ENCODE measurements at regions of chr14 and their contacts with region 1.

Region 1: GRCh38 chr14:67943947-67944346 is 124.4 kb downstream of the RAD51B start:
- DNase-seq: peak; percentile 87
- ATAC-seq: peak; percentile 53
- H3K4me3 ChIP-seq: no peak overlapping the region
- H3K27ac ChIP-seq: no peak overlapping the region
- H3K4me1 ChIP-seq: peaks cover 17% of the 10 kb centered on the region
- H3K27me3 ChIP-seq: no peaks in the 10 kb centered on the region
- CTCF ChIP-seq: peak; percentile 87
- POLR2A ChIP-seq: no peak
- RAD21 ChIP-seq: peak; percentile 88

Region 2: GRCh38 chr14:67749341-67750084 is 194.4 kb before region 1 on chr14:
- CTCF ChIA-PET with region 1: no interaction called
- POLR2A ChIA-PET with region 1: no interaction called
- dilution Hi-C with region 1: no loop called
- in situ Hi-C with region 1: no loop called
- intact Hi-C with region 1: no loop called
- DNase-seq: peak; percentile 7
- ATAC-seq: no peak
- H3K4me3 ChIP-seq: no peak overlapping the region
- H3K27ac ChIP-seq: no peak overlapping the region
- H3K4me1 ChIP-seq: no peaks in the 10 kb centered on the region
- H3K27me3 ChIP-seq: no peaks in the 10 kb centered on the region
- CTCF ChIP-seq: no peak
- POLR2A ChIP-seq: no peak
- RAD21 ChIP-seq: no peak

Region 3: GRCh38 chr14:68146807-68147206 is 202.9 kb after region 1 on chr14:
- CTCF ChIA-PET with region 1: no interaction called
- POLR2A ChIA-PET with region 1: no interaction called
- dilution Hi-C with region 1: no loop called
- in situ Hi-C with region 1: no loop called
- intact Hi-C with region 1: loop called (anchors 5 kb)
- DNase-seq: peak; percentile 96
- ATAC-seq: peak; percentile 94
- H3K4me3 ChIP-seq: no peak overlapping the region
- H3K27ac ChIP-seq: no peak overlapping the region
- H3K4me1 ChIP-seq: peaks cover 14% of the 10 kb centered on the region
- H3K27me3 ChIP-seq: no peaks in the 10 kb centered on the region
- CTCF ChIP-seq: no peak
- POLR2A ChIP-seq: no peak
- RAD21 ChIP-seq: no peak

Region 4: GRCh38 chr14:68191567-68192321 is 247.8 kb after region 1 on chr14:
- CTCF ChIA-PET with region 1: no interaction called
- POLR2A ChIA-PET with region 1: no interaction called
- dilution Hi-C with region 1: no loop called
- in situ Hi-C with region 1: no loop called
- intact Hi-C with region 1: no loop called
- DNase-seq: peak; percentile 37
- ATAC-seq: no peak
- H3K4me3 ChIP-seq: no peak overlapping the region
- H3K27ac ChIP-seq: no peak overlapping the region
- H3K4me1 ChIP-seq: peaks cover 2% of the 10 kb centered on the region; the same call in 1 of the 2 replicates
- H3K27me3 ChIP-seq: no peaks in the 10 kb centered on the region
- CTCF ChIP-seq: no peak
- POLR2A ChIP-seq: no peak
- RAD21 ChIP-seq: no peak

Region 5: DNA sequence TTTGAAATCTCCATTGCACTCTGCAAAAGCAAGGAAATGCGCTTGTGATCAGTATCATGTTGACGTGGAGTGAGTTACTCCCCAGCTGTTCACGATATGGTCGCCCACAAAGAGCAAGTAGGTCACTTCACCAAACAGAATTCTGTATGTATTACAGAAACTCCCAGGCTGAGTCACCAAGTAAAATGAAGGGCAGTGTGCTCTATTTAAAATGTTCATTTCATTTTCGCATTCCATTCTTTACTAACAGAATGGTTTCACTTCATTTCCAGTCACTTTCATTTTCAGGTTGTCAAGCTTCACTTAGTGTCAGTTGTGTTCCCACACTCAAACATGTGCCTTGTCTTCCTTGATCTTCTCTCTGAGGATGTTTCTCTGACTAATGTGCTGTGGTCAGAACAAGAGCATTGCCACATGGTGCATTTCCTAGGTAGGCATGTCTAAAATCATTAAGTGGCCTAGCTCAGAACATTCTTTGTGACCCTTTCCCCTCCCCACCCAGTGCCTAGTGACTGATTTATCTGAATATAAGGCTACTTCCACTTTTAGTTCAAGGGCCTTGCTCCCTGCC is 266.9 kb after region 1 on chr14:
- CTCF ChIA-PET with region 1: no interaction called
- POLR2A ChIA-PET with region 1: no interaction called
- dilution Hi-C with region 1: no loop called
- in situ Hi-C with region 1: no loop called
- intact Hi-C with region 1: no loop called
- DNase-seq: peak; percentile 99
- ATAC-seq: peak; percentile 95
- H3K4me3 ChIP-seq: peak overlapping the region; percentile 24; the same call in 1 of the 2 replicates
- H3K27ac ChIP-seq: peak overlapping the region; percentile 75; the same call in 1 of the 2 replicates
- H3K4me1 ChIP-seq: peaks cover 15% of the 10 kb centered on the region
- H3K27me3 ChIP-seq: no peaks in the 10 kb centered on the region
- CTCF ChIP-seq: no peak
- POLR2A ChIP-seq: no peak
- RAD21 ChIP-seq: peak; percentile 2; the same call in 1 of the 2 replicates

Region 6: GRCh38 chr14:68232300-68233055 is 288.5 kb after region 1 on chr14:
- CTCF ChIA-PET with region 1: interaction called, 3 read pairs
- POLR2A ChIA-PET with region 1: no interaction called
- dilution Hi-C with region 1: no loop called
- in situ Hi-C with region 1: no loop called
- intact Hi-C with region 1: loop called (anchors 5 kb)
- DNase-seq: peak; percentile 99
- ATAC-seq: peak; percentile 85
- H3K4me3 ChIP-seq: no peak overlapping the region
- H3K27ac ChIP-seq: peak overlapping the region; percentile 84
- H3K4me1 ChIP-seq: peaks cover 16% of the 10 kb centered on the region
- H3K27me3 ChIP-seq: no peaks in the 10 kb centered on the region
- CTCF ChIP-seq: no peak; the same call in 1 of the 2 replicates
- POLR2A ChIP-seq: 0 out of 2 replicates have a peak, but pooled peaks have one; percentile 21
- RAD21 ChIP-seq: peak; percentile 24; the same call in 1 of the 2 replicates

Region 7: DNA sequence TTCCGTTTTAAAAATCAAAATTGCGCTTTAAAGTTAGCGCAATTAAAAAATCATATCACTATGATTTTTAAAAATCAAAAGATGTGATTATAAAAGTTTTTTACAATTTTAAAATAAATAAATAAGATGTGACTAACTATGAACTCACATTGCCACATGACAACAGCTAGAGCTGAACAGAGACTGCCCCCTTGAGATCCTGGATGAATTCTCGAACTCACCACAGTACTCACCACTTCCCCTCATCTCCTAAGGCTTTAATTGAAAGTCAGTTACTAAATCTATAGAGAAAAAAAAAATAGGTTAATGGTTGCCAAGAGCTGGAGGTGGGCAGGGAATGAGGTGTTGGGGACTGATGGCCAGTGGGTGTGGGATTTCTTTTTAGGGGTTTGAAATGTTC is 464.7 kb after region 1 on chr14:
- CTCF ChIA-PET with region 1: no interaction called
- POLR2A ChIA-PET with region 1: no interaction called
- dilution Hi-C with region 1: no loop called
- in situ Hi-C with region 1: no loop called
- intact Hi-C with region 1: loop called (anchors 5 kb)
- DNase-seq: peak; percentile 48
- ATAC-seq: no peak
- H3K4me3 ChIP-seq: no peak overlapping the region
- H3K27ac ChIP-seq: no peak overlapping the region
- H3K4me1 ChIP-seq: peaks cover 17% of the 10 kb centered on the region
- H3K27me3 ChIP-seq: no peaks in the 10 kb centered on the region
- CTCF ChIP-seq: peak; percentile 33
- POLR2A ChIP-seq: no peak
- RAD21 ChIP-seq: peak; percentile 31; the same call in 1 of the 2 replicates

Region 8: DNA sequence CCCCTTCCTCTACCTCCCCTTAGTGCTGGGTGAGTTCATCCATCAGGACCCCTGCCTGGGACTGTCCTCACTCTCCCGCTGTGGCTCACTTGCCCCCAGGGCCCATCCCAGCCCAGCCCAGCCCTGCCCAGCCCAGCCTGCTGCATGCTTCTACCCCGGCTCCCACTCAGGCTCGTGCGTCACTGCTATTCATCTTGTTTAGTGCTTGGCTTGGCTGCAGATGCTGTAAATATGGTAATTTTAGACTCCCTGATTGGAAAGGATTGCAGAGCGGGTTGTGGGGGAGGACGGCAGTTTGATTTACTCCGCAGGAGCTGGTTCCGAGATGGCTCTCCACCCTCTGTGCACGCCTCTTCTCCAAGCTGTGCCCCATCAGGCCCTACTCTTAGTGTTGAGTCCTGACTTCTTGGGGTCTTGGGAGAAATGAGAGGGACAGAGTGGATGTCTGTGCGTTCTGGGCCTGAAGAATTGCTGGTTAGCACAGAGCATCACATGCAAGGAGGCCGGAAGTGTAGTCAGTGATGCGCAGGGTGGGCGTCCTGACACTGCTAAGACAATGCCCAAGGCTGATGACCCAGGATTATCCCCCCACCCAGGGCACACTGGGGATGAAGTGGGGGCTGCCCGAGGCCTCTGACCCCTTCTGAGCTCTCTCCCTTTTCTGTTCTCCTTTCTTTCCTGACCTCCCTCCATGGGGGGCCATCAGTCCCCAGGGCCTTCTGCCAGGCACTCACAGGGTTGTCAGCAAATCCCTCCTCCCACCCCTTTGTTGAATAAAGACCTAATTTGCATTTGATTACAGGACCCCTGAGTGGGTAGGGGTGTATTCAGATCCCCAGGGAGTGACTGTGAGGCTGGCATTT is 604.5 kb after region 1 on chr14:
- CTCF ChIA-PET with region 1: no interaction called
- POLR2A ChIA-PET with region 1: no interaction called
- dilution Hi-C with region 1: no loop called
- in situ Hi-C with region 1: no loop called
- intact Hi-C with region 1: loop called (anchors 5 kb)
- DNase-seq: peak; percentile 98
- ATAC-seq: peak; percentile 79
- H3K4me3 ChIP-seq: no peak overlapping the region
- H3K27ac ChIP-seq: peak overlapping the region; percentile 95
- H3K4me1 ChIP-seq: peaks cover 45% of the 10 kb centered on the region
- H3K27me3 ChIP-seq: no peaks in the 10 kb centered on the region
- CTCF ChIP-seq: no peak
- POLR2A ChIP-seq: 0 out of 2 replicates have a peak, but pooled peaks have one; percentile 30
- RAD21 ChIP-seq: peak; percentile 31

Region 9: GRCh38 chr14:68663385-68664076 is 719.6 kb after region 1 on chr14:
- CTCF ChIA-PET with region 1: no interaction called
- POLR2A ChIA-PET with region 1: no interaction called
- dilution Hi-C with region 1: no loop called
- in situ Hi-C with region 1: no loop called
- intact Hi-C with region 1: loop called (anchors 10 kb)
- DNase-seq: peak; percentile 91
- ATAC-seq: peak; percentile 38
- H3K4me3 ChIP-seq: peak overlapping the region; percentile 6; the same call in 1 of the 2 replicates
- H3K27ac ChIP-seq: peak overlapping the region; percentile 35; the same call in 1 of the 2 replicates
- H3K4me1 ChIP-seq: peaks cover 40% of the 10 kb centered on the region
- H3K27me3 ChIP-seq: no peaks in the 10 kb centered on the region
- CTCF ChIP-seq: no peak
- POLR2A ChIP-seq: no peak
- RAD21 ChIP-seq: peak; percentile 30

Region 10: GRCh38 chr14:68816262-68816942 is 872.5 kb after region 1 on chr14:
- CTCF ChIA-PET with region 1: interaction called, 4 read pairs
- POLR2A ChIA-PET with region 1: no interaction called
- dilution Hi-C with region 1: no loop called
- in situ Hi-C with region 1: no loop called
- intact Hi-C with region 1: loop called (anchors 1 kb)
- DNase-seq: peak; percentile 86
- ATAC-seq: peak; percentile 86
- H3K4me3 ChIP-seq: peak overlapping the region; percentile 38
- H3K27ac ChIP-seq: peak overlapping the region; percentile 92
- H3K4me1 ChIP-seq: peaks cover 24% of the 10 kb centered on the region
- H3K27me3 ChIP-seq: no peaks in the 10 kb centered on the region
- CTCF ChIP-seq: peak; percentile 97
- POLR2A ChIP-seq: 0 out of 2 replicates have a peak, but pooled peaks have one; percentile 16
- RAD21 ChIP-seq: peak; percentile 98

Measured in IMR-90 (cell line).